PC-9 (cell line): ENCODE measurements at regions of chr12 and their contacts with region 1.

Region 1: DNA sequence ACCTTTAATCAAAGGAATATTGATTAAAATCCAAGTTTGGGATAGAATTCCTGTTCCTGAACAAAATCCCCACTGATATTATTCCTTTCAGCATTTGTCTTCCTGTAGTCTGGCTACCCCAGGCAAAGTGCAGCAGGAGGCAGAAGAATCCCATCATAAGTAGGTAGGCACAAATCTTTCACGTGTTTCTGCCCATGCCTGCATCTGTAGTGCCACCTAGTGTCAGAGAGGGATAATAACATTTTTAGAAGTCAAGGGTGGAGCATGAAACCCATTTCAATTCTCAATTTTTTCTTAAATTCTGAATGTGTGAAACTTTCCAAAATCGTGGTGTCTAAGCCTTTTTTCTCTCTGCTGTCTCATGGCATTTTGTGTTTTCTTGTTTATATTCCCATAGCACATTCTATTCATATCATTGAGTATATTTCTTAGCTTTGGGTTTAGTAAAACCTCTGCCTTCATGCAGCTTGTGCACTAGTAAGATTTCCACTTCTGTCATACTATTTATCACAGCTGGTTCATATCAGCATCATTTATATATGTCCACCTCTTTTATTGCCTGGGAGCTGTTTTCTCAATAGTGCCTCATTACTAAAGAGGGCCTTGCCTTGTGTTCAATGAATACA is 47.8 kb upstream of the RERG start:
- DNase-seq: peak; percentile 53 to 63
- H3K4me3 ChIP-seq: no peak overlapping the region
- H3K27ac ChIP-seq: no peak overlapping the region
- H3K4me1 ChIP-seq: 0 out of 2 replicates have a peak, but pooled peaks cover 2% of the 10 kb centered on the region
- H3K27me3 ChIP-seq: no peaks in the 10 kb centered on the region
- CTCF ChIP-seq: peak; percentile 92

Region 2: DNA sequence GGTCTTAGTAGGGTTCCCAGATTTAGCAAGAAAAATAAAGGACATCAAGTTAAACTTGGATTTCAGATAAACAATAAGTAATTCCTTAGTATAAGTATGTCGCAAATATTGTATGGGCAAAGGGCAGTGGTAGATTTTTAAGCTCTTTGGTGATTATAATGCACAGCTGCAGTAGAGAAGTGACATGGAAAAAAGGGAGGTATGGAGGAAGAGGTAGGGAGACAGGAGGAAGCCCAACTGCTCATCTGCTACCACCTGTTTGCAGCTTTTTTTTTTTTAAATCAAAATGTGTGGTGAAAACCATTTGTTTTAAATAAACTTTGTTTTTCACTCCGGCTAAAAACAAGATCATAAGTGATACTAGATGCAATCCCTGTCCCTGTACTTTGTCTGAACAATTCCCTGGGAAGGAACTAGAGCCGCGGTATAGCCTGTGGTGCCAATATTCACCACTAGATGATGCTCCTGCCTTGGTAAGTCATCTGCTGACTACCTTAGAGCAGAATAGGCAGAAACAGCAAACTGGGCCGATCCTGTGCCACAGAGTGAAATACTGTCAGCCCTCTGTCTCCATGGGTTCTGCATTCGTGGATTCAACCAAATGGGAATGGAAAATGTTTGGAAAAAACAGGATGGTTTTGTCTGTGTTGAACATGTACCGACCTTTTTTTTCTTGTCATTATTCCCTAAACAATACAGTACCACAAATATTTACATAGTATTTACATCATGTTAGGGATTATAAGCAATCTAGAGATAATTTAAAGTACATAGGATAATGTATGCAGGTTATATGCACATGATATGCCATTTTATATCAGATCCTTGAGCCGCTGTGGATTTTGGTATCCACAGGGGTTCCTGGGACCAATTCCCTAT is 639.0 kb before region 1 on chr12:
- CTCF ChIA-PET with region 1: no interaction called
- POLR2A ChIA-PET with region 1: no interaction called
- intact Hi-C with region 1: loop called (anchors 1 kb)
- DNase-seq: peak; percentile 51 to 75
- H3K4me3 ChIP-seq: no peak overlapping the region
- H3K27ac ChIP-seq: no peak overlapping the region
- H3K4me1 ChIP-seq: no peaks in the 10 kb centered on the region
- H3K27me3 ChIP-seq: no peaks in the 10 kb centered on the region
- CTCF ChIP-seq: peak; percentile 94

Region 3: DNA sequence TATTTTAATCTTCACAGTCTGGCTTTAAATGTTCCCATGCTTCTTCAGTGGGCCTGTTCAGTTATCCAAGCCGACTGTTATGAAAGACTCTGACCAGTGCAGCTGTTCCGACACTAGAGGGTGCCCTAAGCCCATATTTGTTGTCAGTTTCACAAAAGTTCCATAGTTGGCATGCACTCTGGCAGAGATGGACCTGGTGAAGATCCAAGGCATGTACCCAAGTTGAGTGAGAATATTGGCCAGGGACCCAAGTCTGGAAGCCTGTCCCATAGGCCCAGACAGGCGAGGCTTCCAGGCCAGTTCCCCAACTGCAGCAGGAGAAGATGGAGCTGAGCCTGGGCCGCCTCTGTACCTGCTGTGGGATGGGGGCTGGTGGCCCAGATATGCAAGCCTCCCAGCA is 545.3 kb before region 1 on chr12:
- CTCF ChIA-PET with region 1: no interaction called
- POLR2A ChIA-PET with region 1: no interaction called
- intact Hi-C with region 1: loop called (anchors 1 kb)
- DNase-seq: peak; percentile 36 to 50
- H3K4me3 ChIP-seq: no peak overlapping the region
- H3K27ac ChIP-seq: no peak overlapping the region
- H3K4me1 ChIP-seq: no peaks in the 10 kb centered on the region
- H3K27me3 ChIP-seq: no peaks in the 10 kb centered on the region
- CTCF ChIP-seq: peak; percentile 83

Region 4: DNA sequence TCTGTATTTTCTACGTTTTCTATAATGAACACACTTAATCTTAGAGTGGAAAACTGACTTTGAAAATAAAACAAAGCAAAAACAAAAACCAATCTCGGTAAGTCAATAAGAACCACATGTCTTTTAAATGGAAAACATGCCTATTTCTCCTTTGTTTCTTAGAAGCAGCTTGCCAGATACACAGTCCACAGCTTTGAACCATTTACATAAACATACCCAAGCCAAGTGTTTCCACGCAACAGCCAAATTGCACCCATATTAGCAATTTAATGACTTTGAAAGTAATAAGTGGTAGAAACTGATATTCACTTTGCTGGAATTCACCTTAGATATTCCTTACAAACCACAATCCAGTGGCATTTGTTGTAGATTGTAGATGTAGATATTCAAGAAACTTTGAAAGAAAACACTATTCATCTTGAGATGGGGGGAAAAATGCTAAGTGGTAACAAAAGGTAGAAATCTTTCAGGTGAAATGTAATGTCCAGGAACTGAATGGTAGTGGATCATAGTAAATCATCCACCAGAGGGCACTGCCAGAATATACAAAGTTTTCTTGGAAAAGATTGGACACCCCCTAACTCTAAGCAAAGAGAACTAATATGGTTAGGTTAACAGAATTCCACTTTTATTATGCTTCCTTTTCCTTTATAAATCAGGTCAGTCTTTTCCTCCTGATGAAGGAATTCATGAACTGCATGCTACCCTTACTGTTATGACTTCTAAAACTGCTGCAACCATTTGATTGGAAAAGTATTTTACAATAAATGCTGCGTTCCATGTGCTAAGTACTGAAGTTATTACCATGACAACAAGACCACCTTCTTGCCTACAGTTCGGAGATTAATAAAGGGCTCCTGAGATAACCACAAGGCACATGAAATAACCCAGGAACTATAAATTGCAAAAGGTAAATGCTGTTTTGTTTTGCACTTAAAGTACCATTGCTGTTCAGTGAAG is 117.6 kb before region 1 on chr12:
- CTCF ChIA-PET with region 1: no interaction called
- POLR2A ChIA-PET with region 1: no interaction called
- intact Hi-C with region 1: loop called (anchors 1 kb)
- DNase-seq: no peak
- H3K4me3 ChIP-seq: no peak overlapping the region
- H3K27ac ChIP-seq: no peak overlapping the region
- H3K4me1 ChIP-seq: peaks cover 19% of the 10 kb centered on the region
- H3K27me3 ChIP-seq: no peaks in the 10 kb centered on the region
- CTCF ChIP-seq: peak; percentile 73

Region 5: DNA sequence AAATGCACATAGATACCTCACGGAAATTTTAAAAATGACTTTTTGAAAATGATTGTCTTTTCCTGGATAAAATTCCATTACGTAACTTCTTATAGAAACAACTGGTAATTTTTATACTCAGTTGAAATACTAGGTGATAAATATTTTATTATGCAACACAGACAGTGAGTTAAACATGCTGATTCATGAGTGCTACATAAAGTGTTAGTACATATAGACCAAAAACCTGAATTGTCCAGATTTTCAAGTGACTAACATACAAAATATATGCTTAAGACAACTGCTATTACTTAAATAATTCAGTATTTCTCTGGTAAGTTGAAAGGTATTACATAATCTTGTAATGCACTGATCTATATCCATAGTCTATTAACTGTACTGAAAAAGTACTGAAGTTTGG is 65.2 kb after region 1 on chr12:
- CTCF ChIA-PET with region 1: no interaction called
- POLR2A ChIA-PET with region 1: no interaction called
- intact Hi-C with region 1: no loop called
- DNase-seq: no peak
- H3K4me3 ChIP-seq: no peak overlapping the region
- H3K27ac ChIP-seq: no peak overlapping the region
- H3K4me1 ChIP-seq: 0 out of 2 replicates have a peak, but pooled peaks cover 10% of the 10 kb centered on the region
- H3K27me3 ChIP-seq: no peaks in the 10 kb centered on the region
- CTCF ChIP-seq: no peak